GM10248 (cell line): ENCODE measurements at regions of chr2 and their contacts with region 1.

Region 1: GRCh38 chr2:69946351-69947077 is 14.9 kb downstream of the ASPRV1 start:
- DNase-seq: peak; percentile 66
- CTCF ChIP-seq: no peak

Region 2: GRCh38 chr2:69933839-69934613 is 12.5 kb before region 1 on chr2:
- CTCF ChIA-PET with region 1: interaction called, 11 read pairs
- POLR2A ChIA-PET with region 1: no interaction called
- DNase-seq: no peak
- CTCF ChIP-seq: no peak